ENCODE measurements at regions of chr16 and their contacts with region 1.

Region 1: GRCh38 chr16:87062569-87063442 is 254.4 kb downstream of the C16orf95 start:
- DNase-seq: peak; percentile 73 to 89
- H3K4me3 ChIP-seq: peak overlapping the region; percentile 38 to 49
- H3K27ac ChIP-seq: peak overlapping the region; percentile 79 to 83
- H3K4me1 ChIP-seq: peaks cover 0 to 47% (median under 1%) of the 10 kb centered on the region in 4 donors
- H3K27me3 ChIP-seq: no peaks in the 10 kb centered on the region
- CTCF ChIP-seq: peak; percentile 86 to 89

Region 2: GRCh38 chr16:86761111-86762031 is 301.4 kb before region 1 on chr16:
- intact Hi-C with region 1: loop called (anchors 5 kb)
- DNase-seq: peak; percentile 58 to 87
- H3K4me3 ChIP-seq: peak overlapping the region; percentile 27 to 31
- H3K27ac ChIP-seq: no peak overlapping the region
- H3K4me1 ChIP-seq: peaks cover 0 to 25% (median 9%) of the 10 kb centered on the region in 4 donors
- H3K27me3 ChIP-seq: no peaks in the 10 kb centered on the region
- CTCF ChIP-seq: peak; percentile 85 to 87

Region 3: DNA sequence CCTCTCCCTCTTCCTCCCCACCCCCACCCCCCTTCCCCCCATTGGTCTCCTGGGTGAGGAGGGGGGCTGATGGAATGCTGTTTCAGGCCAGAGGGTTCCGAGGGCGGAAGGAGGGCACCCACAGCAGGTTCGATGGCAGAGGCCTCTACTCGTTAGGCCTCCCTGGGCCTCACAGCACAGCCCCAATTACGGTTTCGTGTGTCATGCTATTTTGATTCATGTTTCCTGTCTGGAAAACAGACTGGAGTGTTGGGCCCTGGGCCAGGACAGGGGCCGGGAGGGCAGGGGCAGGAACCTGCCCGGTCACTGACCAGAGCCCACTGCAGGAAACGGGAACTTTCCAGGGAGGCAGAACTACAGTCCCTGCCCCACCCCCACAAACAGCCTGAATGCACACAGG is 116.2 kb after region 1 on chr16:
- intact Hi-C with region 1: no loop called
- DNase-seq: no peak
- H3K4me3 ChIP-seq: no peak overlapping the region
- H3K27ac ChIP-seq: peak overlapping the region; percentile 64 to 65
- H3K4me1 ChIP-seq: peaks cover 0 to 26% (median 19%) of the 10 kb centered on the region in 4 donors
- H3K27me3 ChIP-seq: no peaks in the 10 kb centered on the region
- CTCF ChIP-seq: no peak

Measured in tibial artery (tissue), 4 donors.